ENCODE measurements at regions of chr5 and their contacts with region 1.

Region 1: DNA sequence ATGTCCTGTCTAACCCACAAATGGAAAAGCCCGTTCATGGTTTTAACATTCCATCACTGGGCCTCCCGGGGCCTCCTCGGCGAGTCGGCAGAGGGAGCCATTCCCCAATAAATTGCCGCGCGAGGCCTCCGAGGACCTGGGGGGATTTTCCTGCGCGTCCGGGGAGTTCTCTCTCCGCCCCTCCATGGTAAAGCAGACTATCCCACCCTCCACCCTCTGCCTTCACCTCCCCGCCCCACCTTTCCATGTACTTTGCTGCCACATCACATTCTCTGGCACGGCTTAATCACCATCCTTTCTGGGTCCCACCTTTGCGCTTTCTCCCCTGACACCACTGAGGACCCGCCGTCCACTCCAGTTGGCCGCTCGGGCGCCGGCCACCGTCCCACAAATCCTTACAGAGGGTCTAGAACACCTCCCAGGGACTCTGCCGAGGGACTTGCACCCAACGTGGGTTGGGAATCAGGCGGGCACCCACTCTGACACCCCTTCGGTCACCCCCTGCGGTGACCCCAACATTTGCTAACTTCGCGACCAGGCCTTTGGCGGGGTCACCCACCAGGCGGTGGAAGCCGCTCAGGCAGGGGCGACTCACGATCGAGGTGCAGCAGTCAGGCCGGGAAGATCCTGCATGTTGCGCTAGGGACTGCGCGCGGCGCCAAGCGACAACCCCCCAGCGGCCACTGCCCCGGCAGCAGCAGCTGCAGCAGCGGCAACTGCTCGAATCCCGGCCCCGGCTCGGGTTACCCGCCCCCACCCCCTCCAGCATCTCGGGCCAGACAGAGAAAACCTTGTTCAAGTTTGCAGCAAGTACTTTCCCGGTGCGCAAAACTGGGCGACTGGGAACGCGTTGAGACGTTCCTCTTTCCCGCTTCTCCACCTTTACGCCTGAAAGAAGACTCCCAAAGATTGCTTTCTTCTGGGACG is at the start of gene MEGF10:
- DNase-seq: peak; percentile 7
- ATAC-seq: peak; percentile 95
- H3K4me3 ChIP-seq: peak within 1 kb of the TSS in 1 of 3 experiments; percentile 27; a peak in 1 of 6 replicates
- H3K27ac ChIP-seq: no peak within 1 kb of the TSS
- H3K4me1 ChIP-seq: peaks cover 12% of the 10 kb centered on the region; the same call in 1 of the 2 replicates
- H3K27me3 ChIP-seq: peaks cover 0 to 23% of the 10 kb centered on the region in 2 experiments; a peak in 4 of 5 replicates
- CTCF ChIP-seq: peak; percentile 73
- EP300 ChIP-seq: no peak
- POLR2A ChIP-seq: no peak
- RAD21 ChIP-seq: peak; percentile 60
- total RNA-seq, gene MEGF10: not detected in 2 replicates

Region 2: DNA sequence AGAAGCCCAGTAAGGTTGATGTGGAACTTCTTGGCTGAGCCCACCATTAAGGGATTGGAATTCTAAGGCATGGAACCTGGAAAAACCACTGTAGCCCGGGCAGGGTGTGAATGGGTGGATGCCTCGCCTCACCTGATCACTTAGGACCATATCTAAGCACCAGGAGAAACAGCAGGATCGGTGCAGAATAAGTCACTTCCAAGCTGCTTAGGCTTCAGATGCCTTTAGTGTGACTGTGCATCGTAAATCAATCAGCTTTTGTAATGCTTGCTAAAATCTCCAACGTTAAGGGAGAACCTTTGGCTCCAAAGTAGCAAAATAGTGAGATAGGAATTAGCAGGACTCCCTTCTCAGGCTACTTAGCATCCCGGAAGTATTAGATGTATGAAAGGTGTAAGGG is 103.6 kb before region 1 on chr5:
- CTCF ChIA-PET with region 1: no interaction called
- POLR2A ChIA-PET with region 1: no interaction called
- in situ Hi-C with region 1: no loop called
- intact Hi-C with region 1: no loop called
- DNase-seq: no peak
- ATAC-seq: no peak
- H3K4me3 ChIP-seq: no peak overlapping the region
- H3K27ac ChIP-seq: no peak overlapping the region
- H3K4me1 ChIP-seq: no peaks in the 10 kb centered on the region
- H3K27me3 ChIP-seq: no peaks in the 10 kb centered on the region; a peak in 1 of 5 replicates
- CTCF ChIP-seq: no peak
- EP300 ChIP-seq: no peak
- POLR2A ChIP-seq: no peak
- RAD21 ChIP-seq: no peak

Region 3: DNA sequence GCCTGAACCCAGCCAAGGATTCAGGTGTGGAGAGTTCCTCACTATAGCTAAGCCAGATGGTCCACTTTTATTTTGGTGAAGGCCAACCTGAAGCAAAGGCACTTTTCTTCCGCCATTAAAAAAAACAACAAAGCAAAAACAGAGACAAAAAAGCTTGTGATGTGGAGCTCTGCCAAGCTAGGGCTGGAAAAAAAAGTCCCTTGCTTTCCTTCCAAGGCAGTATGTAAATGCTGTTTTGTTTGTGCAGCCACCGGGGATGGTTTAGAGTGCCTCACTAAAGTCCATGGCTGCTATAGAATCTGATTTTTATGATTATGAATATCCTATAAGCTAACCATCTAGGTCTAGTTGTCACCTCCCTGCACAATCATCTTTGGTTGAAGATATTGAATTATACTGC is 15.2 kb after region 1 on chr5:
- CTCF ChIA-PET with region 1: no interaction called
- POLR2A ChIA-PET with region 1: no interaction called
- in situ Hi-C with region 1: no loop called
- intact Hi-C with region 1: no loop called
- DNase-seq: no peak
- ATAC-seq: no peak
- H3K4me3 ChIP-seq: no peak overlapping the region
- H3K27ac ChIP-seq: no peak overlapping the region
- H3K4me1 ChIP-seq: no peaks in the 10 kb centered on the region
- H3K27me3 ChIP-seq: no peaks in the 10 kb centered on the region; a peak in 1 of 5 replicates
- CTCF ChIP-seq: no peak
- EP300 ChIP-seq: no peak
- POLR2A ChIP-seq: no peak
- RAD21 ChIP-seq: no peak

Region 4: GRCh38 chr5:127492854-127493738 is 202.8 kb after region 1 on chr5:
- CTCF ChIA-PET with region 1: interaction called, 19 read pairs
- POLR2A ChIA-PET with region 1: no interaction called
- in situ Hi-C with region 1: loop called (anchors 5 kb)
- intact Hi-C with region 1: loop called (anchors 1 kb)
- DNase-seq: peak; percentile 30
- ATAC-seq: peak; percentile 71
- H3K4me3 ChIP-seq: no peak overlapping the region
- H3K27ac ChIP-seq: no peak overlapping the region
- H3K4me1 ChIP-seq: no peaks in the 10 kb centered on the region
- H3K27me3 ChIP-seq: no peaks in the 10 kb centered on the region
- CTCF ChIP-seq: peak; percentile 63
- EP300 ChIP-seq: no peak
- POLR2A ChIP-seq: no peak
- RAD21 ChIP-seq: 0 out of 2 replicates have a peak, but pooled peaks have one; percentile 28

Measured in HepG2 (cell line).